ENCODE measurements at regions of chr15 and their contacts with region 1.

Region 1: GRCh38 chr15:78108299-78109084 is 16.1 kb downstream of the SH2D7 start:
- DNase-seq: peak; percentile 73 to 86 (median 82)
- ATAC-seq: peak; percentile 91
- H3K4me3 ChIP-seq: no peak overlapping the region
- H3K4me3 Mint-ChIP-seq: peak overlapping the region in 1 of 10 donors; percentile 40
- H3K27ac ChIP-seq: no peak overlapping the region
- H3K27ac Mint-ChIP-seq: peak overlapping the region in 6 of 9 donors; percentile 14 to 69 (median 52)
- H3K4me1 ChIP-seq: peaks cover 18 to 32% of the 10 kb centered on the region in 2 donors
- H3K4me1 Mint-ChIP-seq: peaks cover 25 to 57% (median 28%) of the 10 kb centered on the region in 7 donors
- H3K27me3 ChIP-seq: no peaks in the 10 kb centered on the region
- H3K27me3 Mint-ChIP-seq: no peaks in the 10 kb centered on the region

Region 2: DNA sequence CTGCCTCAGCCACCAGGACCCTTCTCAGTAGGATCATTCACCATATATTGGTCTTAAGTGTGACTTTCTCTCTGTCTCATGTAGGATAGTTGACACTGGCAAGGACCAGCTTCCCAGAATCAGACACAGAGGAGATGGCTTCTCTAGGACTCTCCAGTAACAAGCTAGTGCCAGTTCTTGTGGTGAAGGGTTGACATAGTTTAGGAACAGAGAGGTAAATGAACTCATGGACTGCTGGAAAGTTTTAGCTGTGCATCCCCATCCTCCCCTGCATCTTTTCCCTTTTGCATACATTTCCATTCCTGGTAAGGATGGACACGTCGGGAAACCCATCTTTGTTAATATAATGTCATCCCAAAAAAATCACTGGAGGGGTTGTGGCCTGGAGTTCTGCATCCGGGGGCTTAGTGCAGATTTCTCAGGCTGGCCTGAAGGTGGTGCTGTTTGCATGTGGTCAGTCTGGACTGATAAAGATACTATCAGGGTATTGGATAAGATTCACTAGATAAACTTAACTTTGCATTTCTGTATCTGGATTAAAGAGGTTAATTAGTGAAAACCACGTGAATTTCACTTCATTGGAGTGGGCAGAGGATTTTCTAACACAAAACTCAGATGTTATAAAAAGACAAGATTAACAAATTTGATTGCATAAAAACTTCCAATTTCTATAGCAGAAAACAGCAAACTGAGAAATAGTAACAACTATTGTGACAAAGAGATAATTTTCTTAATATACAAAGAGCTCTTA is 141.8 kb before region 1 on chr15:
- CTCF ChIA-PET with region 1: interaction called, 84 read pairs
- POLR2A ChIA-PET with region 1: no interaction called
- intact Hi-C with region 1: loop called (anchors 1 kb)
- DNase-seq: peak in 5 of 9 donors; percentile 20 to 55 (median 43)
- ATAC-seq: peak; percentile 73
- H3K4me3 ChIP-seq: no peak overlapping the region
- H3K4me3 Mint-ChIP-seq: no peak overlapping the region
- H3K27ac ChIP-seq: no peak overlapping the region
- H3K27ac Mint-ChIP-seq: peak overlapping the region in 2 of 9 donors; percentile 2 to 9
- H3K4me1 ChIP-seq: no peaks in the 10 kb centered on the region
- H3K4me1 Mint-ChIP-seq: peaks cover 0 to 3% (median 0%) of the 10 kb centered on the region in 7 donors
- H3K27me3 ChIP-seq: no peaks in the 10 kb centered on the region
- H3K27me3 Mint-ChIP-seq: peaks cover 0 to 40% (median 0%) of the 10 kb centered on the region in 5 donors

Region 3: DNA sequence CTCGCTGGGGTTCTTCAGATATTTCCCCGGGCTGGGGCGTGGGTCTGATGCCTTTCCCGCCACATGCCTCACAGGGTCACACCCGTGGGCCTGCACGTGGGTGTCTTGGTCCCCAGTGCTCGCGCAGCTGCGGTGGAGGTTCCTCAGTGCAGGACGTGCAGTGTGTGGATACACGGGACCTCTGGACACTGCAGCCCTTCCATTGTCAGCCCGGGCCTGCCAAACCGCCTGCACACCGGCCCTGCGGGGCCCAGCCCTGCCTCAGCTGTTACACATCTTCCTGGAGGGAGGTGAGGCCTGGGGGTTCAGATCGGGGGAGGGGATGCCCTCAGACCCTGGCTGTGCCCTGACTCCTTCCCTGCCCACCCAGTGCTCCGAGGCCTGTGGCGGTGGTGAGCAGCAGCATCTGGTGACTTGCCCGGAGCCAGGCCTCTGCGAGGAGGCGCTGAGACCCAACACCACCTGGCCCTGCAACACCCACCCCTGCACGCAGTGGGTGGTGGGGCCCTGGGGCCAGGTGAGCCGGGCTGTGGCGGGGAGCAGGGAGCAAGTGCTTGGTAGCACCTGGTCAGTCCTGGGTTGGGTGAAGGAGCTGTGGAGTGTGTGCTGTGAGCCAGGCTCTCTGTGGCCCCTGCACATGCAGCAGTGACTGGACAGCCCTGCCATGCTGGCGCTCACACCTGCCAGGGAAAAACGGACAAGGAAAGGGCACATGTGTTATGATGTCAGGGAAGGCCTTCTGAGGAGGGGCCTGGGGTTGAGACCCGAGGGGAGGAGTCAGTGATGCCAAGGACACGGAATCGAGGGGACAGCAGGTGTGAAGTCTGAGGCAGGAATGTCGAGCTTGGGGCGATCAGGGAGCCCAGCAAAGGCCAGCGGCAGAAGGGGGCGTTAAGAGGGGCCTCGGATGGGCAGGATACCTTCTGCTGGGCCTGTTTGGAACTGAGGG is 119.9 kb before region 1 on chr15:
- CTCF ChIA-PET with region 1: no interaction called
- POLR2A ChIA-PET with region 1: no interaction called
- intact Hi-C with region 1: no loop called
- DNase-seq: no peak
- ATAC-seq: no peak
- H3K4me3 ChIP-seq: no peak overlapping the region
- H3K4me3 Mint-ChIP-seq: peak overlapping the region in 1 of 10 donors; percentile 44
- H3K27ac ChIP-seq: no peak overlapping the region
- H3K27ac Mint-ChIP-seq: peak overlapping the region in 4 of 9 donors; percentile 54 to 89 (median 80)
- H3K4me1 ChIP-seq: peaks cover 0 to 15% of the 10 kb centered on the region in 2 donors
- H3K4me1 Mint-ChIP-seq: peaks cover 12 to 27% (median 21%) of the 10 kb centered on the region in 7 donors
- H3K27me3 ChIP-seq: no peaks in the 10 kb centered on the region
- H3K27me3 Mint-ChIP-seq: peaks cover 0 to under 1% (median 0%) of the 10 kb centered on the region in 5 donors

Region 4: DNA sequence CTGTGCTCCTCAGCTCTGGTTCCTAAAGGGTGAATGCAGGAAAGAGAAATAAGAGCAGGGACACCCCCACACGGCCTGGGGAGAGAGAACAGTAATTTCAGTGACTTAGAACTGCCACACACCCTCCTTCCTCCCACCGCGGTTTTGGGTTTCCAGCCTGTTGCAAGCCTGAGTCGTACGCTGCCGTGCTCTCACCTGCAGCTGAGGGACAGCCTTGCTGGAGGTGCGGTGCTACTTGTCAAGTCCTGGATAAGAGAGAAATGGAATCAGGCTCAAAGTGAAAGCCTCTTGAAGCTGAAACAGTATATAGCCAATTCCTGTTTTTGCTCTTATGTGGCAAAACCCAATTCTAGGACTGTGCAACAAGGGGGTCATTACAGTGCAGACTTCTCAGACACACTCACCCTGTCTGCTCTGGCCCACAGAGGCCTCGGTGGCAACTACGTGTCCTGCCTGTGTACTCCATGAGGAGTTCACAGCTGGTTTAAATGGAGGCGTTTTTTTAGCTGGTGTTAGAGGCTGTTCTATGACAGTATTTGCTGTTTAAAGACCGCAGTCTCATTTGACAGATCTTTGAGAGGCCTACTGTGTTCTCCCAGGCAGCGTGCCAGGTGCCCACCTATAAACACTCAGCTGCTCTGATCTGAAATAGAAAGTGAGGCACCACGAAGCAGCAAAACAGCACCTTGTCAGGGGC is 73.8 kb before region 1 on chr15:
- CTCF ChIA-PET with region 1: interaction called, 6 read pairs
- POLR2A ChIA-PET with region 1: interaction called, 3 read pairs
- intact Hi-C with region 1: loop called (anchors 1 to 2 kb)
- DNase-seq: peak; percentile 33 to 78 (median 75)
- ATAC-seq: peak; percentile 87
- H3K4me3 ChIP-seq: peak overlapping the region; percentile 21
- H3K4me3 Mint-ChIP-seq: peak overlapping the region; percentile 56 to 82 (median 77)
- H3K27ac ChIP-seq: peak overlapping the region; percentile 42
- H3K27ac Mint-ChIP-seq: peak overlapping the region; percentile 71 to 97 (median 92)
- H3K4me1 ChIP-seq: peaks cover 60% of the 10 kb centered on the region in 2 donors
- H3K4me1 Mint-ChIP-seq: peaks cover 65 to 84% (median 76%) of the 10 kb centered on the region in 7 donors
- H3K27me3 ChIP-seq: no peaks in the 10 kb centered on the region
- H3K27me3 Mint-ChIP-seq: no peaks in the 10 kb centered on the region

Region 5: GRCh38 chr15:78131295-78132061 is 23.0 kb after region 1 on chr15 and contains the start of gene CIB2:
- CTCF ChIA-PET with region 1: interaction called, 8 read pairs
- POLR2A ChIA-PET with region 1: no interaction called
- intact Hi-C with region 1: loop called (anchors 1 kb)
- DNase-seq: peak; percentile 67 to 90 (median 78)
- ATAC-seq: peak; percentile 90
- H3K4me3 ChIP-seq: peak within 1 kb of the TSS; percentile 74
- H3K4me3 Mint-ChIP-seq: peak within 1 kb of the TSS; percentile 80 to 89 (median 84)
- H3K27ac ChIP-seq: peak within 1 kb of the TSS; percentile 86
- H3K27ac Mint-ChIP-seq: peak within 1 kb of the TSS; percentile 68 to 93 (median 89)
- H3K4me1 ChIP-seq: peaks cover 10 to 11% of the 10 kb centered on the region in 2 donors
- H3K4me1 Mint-ChIP-seq: peaks cover 10 to 37% (median 21%) of the 10 kb centered on the region in 7 donors
- H3K27me3 ChIP-seq: no peaks in the 10 kb centered on the region
- H3K27me3 Mint-ChIP-seq: peaks cover 0 to 2% (median 0%) of the 10 kb centered on the region in 5 donors
- total RNA-seq, gene CIB2: 1.0 to 2.0 (median 1.7) TPM

Region 6: DNA sequence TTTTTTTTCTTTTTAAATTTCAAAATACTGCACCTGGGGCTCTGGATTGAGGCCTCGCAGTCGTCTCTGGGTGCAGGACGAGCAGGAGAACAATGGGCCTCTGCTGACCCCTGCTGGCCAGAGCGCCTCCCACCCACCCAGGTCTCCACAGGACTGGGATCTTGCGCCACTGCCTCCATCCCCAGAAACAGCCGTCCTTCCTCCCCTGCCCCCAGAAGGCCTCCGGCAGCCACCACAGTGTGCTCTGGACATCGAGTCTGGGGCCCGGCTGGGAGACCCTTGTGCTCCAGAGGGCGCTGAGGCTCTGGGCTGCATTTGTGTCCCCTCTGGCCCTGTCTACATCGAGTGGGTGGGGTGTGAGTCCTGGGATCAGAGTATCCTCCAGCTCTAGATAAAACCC is 132.5 kb after region 1 on chr15:
- CTCF ChIA-PET with region 1: interaction called, 51 read pairs
- POLR2A ChIA-PET with region 1: no interaction called
- intact Hi-C with region 1: loop called (anchors 1 kb)
- DNase-seq: peak; percentile 55 to 82 (median 69)
- ATAC-seq: peak; percentile 94
- H3K4me3 ChIP-seq: no peak overlapping the region
- H3K4me3 Mint-ChIP-seq: no peak overlapping the region
- H3K27ac ChIP-seq: no peak overlapping the region
- H3K27ac Mint-ChIP-seq: no peak overlapping the region
- H3K4me1 ChIP-seq: no peaks in the 10 kb centered on the region
- H3K4me1 Mint-ChIP-seq: peaks cover 0 to 4% (median 0%) of the 10 kb centered on the region in 7 donors
- H3K27me3 ChIP-seq: no peaks in the 10 kb centered on the region
- H3K27me3 Mint-ChIP-seq: peaks cover 0 to 4% (median 0%) of the 10 kb centered on the region in 5 donors

Region 7: GRCh38 chr15:78364233-78364632 is 255.7 kb after region 1 on chr15:
- CTCF ChIA-PET with region 1: no interaction called
- POLR2A ChIA-PET with region 1: no interaction called
- intact Hi-C with region 1: no loop called
- DNase-seq: no peak
- ATAC-seq: no peak
- H3K4me3 ChIP-seq: no peak overlapping the region
- H3K4me3 Mint-ChIP-seq: no peak overlapping the region
- H3K27ac ChIP-seq: no peak overlapping the region
- H3K27ac Mint-ChIP-seq: no peak overlapping the region
- H3K4me1 ChIP-seq: no peaks in the 10 kb centered on the region
- H3K4me1 Mint-ChIP-seq: no peaks in the 10 kb centered on the region
- H3K27me3 ChIP-seq: no peaks in the 10 kb centered on the region
- H3K27me3 Mint-ChIP-seq: peaks cover 0 to 28% (median 5%) of the 10 kb centered on the region in 5 donors

Region 8: GRCh38 chr15:78492872-78493271 is 384.4 kb after region 1 on chr15:
- CTCF ChIA-PET with region 1: no interaction called
- POLR2A ChIA-PET with region 1: no interaction called
- intact Hi-C with region 1: no loop called
- DNase-seq: no peak
- ATAC-seq: no peak
- H3K4me3 ChIP-seq: no peak overlapping the region
- H3K4me3 Mint-ChIP-seq: no peak overlapping the region
- H3K27ac ChIP-seq: no peak overlapping the region
- H3K27ac Mint-ChIP-seq: peak overlapping the region in 6 of 9 donors; percentile 3 to 56 (median 28)
- H3K4me1 ChIP-seq: no peaks in the 10 kb centered on the region
- H3K4me1 Mint-ChIP-seq: peaks cover 0 to 14% (median 9%) of the 10 kb centered on the region in 7 donors
- H3K27me3 ChIP-seq: no peaks in the 10 kb centered on the region
- H3K27me3 Mint-ChIP-seq: no peaks in the 10 kb centered on the region

Measured in naive thymus-derived CD4-positive, alpha-beta T cell (primary cell).